RWPE1 (cell line): ENCODE measurements at regions of chr20 and their contacts with region 1.

Region 1: DNA sequence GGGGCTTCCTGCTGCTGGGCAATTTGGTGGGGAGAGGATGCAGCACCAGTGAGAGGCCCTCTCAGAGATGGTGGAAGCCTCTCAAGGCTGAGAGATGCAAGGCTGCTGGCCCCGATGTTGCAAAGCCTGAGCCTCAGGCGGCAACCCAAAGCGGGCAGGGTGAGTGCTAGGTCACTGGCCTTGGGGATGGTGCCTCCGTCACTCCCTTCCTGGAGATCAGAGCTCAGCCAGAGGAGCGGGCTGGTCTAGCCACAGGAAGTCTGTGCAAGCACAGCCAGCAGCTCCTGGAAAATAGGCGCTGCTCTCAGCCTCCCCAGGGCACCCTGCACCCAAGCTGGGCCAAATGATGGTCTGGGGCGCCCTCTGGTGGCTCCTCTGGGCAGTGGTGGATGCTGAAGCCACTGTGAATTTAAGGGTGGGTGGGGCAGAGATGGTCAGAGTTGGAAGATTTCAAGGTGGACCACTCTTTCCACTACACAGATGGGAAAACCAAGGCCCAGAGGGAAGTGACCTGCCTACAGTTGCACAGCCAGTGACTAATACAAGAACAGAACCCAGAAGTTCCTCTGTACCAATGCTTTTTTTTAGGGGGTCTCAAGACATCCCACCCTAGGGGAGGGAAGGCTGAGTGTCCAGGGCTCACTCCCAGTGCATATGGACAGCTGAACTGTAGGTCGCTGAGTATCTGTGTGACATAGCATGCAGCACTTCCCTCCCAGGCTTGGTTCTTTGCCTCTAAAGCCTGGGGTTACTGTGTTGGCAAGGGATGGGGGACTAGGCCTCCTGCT is 20.8 kb downstream of the C20orf203 start:
- DNase-seq: peak; percentile 95
- H3K27ac ChIP-seq: no peak overlapping the region
- CTCF ChIP-seq: peak; percentile 98

Region 2: GRCh38 chr20:32663335-32664011 is 10.5 kb after region 1 on chr20:
- CTCF ChIA-PET with region 1: interaction called, 14 read pairs
- POLR2A ChIA-PET with region 1: no interaction called
- DNase-seq: no peak
- H3K27ac ChIP-seq: no peak overlapping the region
- CTCF ChIP-seq: no peak